GM12878 (cell line): ENCODE measurements at regions of chr13 and their contacts with region 1.

Region 1: GRCh38 chr13:21124852-21125251 is 51.5 kb downstream of the SKA3 start:
- DNase-seq: no peak
- ATAC-seq: no peak; the same call in 2 of the 3 replicates
- H3K4me3 ChIP-seq: no peak overlapping the region
- H3K27ac ChIP-seq: no peak overlapping the region
- H3K4me1 ChIP-seq: no peaks in the 10 kb centered on the region
- H3K27me3 ChIP-seq: no peaks in the 10 kb centered on the region
- CTCF ChIP-seq: no peak
- EP300 ChIP-seq: no peak
- POLR2A ChIP-seq: no peak
- RAD21 ChIP-seq: no peak

Region 2: GRCh38 chr13:22793598-22794134 is 1668.8 kb after region 1 on chr13:
- CTCF ChIA-PET with region 1: no interaction called
- POLR2A ChIA-PET with region 1: no interaction called
- RAD21 ChIA-PET with region 1: no interaction called
- SMC1A ChIA-PET with region 1: no interaction called
- in situ Hi-C with region 1: loop called (anchors 25 kb)
- intact Hi-C with region 1: no loop called
- DNase-seq: no peak
- ATAC-seq: no peak
- H3K4me3 ChIP-seq: no peak overlapping the region
- H3K27ac ChIP-seq: no peak overlapping the region
- H3K4me1 ChIP-seq: no peaks in the 10 kb centered on the region
- H3K27me3 ChIP-seq: no peaks in the 10 kb centered on the region
- CTCF ChIP-seq: no peak
- EP300 ChIP-seq: no peak
- POLR2A ChIP-seq: no peak
- RAD21 ChIP-seq: no peak